Cardiac septum (tissue), 1 donor: ENCODE measurements at regions of chr2 and their contacts with region 1.

Region 1: DNA sequence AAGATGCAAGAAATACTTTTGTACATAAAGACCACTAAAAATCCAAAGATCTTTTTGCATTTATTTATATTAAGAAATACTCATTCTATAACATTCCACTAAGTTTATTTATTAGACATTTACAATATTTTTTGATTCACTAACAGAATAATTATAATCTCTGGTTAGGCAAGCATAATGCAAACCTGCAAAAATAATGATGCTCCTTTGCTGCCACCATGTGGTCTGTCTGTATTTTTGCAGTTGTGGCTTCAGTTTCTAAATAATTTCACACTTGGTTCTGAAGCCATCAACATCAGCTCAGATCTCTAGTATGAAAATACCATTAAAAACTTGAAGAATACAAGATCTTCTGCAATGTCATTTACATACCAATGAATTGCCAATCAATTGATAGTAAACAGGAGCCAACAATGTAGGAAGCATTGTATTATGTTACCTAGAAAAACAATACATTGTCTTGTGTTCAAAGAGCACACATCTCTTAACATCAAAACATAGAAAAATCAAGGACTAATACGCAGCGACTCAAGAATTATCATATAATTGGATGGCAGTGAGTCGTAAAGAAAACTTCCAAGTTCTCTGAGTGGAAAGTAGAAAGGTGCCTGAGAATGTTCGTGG is 28.8 kb upstream of the WDR75 start:
- DNase-seq: no peak

Region 2: DNA sequence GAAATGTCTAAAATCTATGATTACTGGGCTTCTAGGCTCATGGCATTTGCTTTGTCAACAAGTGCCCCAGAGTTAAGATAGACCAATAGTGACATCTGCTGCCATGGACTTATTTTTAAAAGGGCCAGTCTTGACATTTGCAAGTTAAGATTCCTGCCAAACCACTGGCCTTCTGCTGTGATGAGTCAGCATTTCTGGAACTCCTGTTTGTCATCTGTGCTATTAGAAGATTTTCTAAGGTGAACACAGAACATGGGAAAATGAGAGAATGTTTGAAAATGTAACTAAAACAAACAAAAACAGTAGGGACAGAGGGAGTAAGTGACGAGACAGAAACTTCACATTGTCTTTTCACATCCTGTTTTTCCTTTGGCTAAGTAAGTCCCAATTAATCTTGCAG is 64.9 kb before region 1 on chr2:
- intact Hi-C with region 1: loop called (anchors 5 kb)
- DNase-seq: no peak

Region 3: GRCh38 chr2:189549449-189549832 is 137.0 kb after region 1 on chr2:
- intact Hi-C with region 1: no loop called
- DNase-seq: no peak